ENCODE measurements at regions of chr10 and their contacts with region 1.

Region 1: GRCh38 chr10:6678211-6678803 is 98.2 kb upstream of the PRKCQ start:
- DNase-seq: peak; percentile 79
- H3K4me3 Mint-ChIP-seq: no peak overlapping the region
- H3K27ac Mint-ChIP-seq: no peak overlapping the region
- H3K4me1 Mint-ChIP-seq: peaks cover 2% of the 10 kb centered on the region
- H3K27me3 Mint-ChIP-seq: no peaks in the 10 kb centered on the region

Region 2: DNA sequence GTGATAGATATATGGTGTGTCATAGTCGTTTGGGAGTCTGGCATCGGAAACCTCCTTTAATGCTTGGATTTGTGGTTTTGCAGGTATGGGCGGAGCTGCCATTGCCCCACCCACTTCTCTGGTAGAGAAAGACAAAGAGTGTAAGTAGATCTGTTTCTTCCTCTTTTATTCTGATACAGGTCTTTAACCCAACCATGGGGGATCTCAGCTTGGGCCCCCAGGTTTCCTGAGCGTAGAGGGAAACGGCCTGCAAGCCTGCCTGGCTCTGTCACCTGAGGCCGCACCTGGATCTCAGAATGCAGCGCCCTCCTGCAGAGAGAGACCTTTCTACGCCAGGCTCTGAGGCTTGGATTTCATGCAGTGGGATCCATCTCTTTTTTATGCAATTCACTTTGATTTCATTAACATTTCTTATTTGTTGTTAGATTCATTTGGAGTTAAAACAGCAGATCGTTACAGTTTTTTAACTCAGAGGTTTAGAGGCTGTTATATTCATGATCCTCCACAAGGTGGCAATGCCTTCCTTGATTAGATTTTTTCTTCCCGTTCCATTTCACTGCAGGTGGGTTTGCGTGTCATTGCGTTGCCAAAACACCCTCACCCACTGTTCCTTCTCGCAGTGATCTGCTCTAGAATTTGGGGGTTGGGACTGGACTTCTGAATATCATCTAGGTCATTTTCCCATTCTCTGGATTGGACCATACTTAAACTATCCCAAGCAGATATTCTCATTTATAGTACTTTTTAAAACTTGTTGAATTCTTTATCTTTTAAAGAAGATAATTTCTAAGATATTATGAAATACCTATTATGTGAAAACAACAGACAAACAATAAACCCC is 569.5 kb before region 1 on chr10:
- CTCF ChIA-PET with region 1: no interaction called
- intact Hi-C with region 1: loop called (anchors 10 kb)
- DNase-seq: peak; percentile 36
- H3K4me3 Mint-ChIP-seq: no peak overlapping the region
- H3K27ac Mint-ChIP-seq: peak overlapping the region; percentile 66
- H3K4me1 Mint-ChIP-seq: peaks cover 21% of the 10 kb centered on the region
- H3K27me3 Mint-ChIP-seq: no peaks in the 10 kb centered on the region

Measured in activated naive CD4-positive, alpha-beta T cell treated with anti-CD3 and anti-CD28 coated beads for 36 hours (primary cell).